ENCODE measurements at regions of chr2 and their contacts with region 1.

Region 1: GRCh38 chr2:9799665-9800632 is 43.3 kb upstream of the TAF1B start:
- DNase-seq: no peak
- H3K4me3 ChIP-seq: no peak overlapping the region
- CTCF ChIP-seq: peak; percentile 100

Region 2: DNA sequence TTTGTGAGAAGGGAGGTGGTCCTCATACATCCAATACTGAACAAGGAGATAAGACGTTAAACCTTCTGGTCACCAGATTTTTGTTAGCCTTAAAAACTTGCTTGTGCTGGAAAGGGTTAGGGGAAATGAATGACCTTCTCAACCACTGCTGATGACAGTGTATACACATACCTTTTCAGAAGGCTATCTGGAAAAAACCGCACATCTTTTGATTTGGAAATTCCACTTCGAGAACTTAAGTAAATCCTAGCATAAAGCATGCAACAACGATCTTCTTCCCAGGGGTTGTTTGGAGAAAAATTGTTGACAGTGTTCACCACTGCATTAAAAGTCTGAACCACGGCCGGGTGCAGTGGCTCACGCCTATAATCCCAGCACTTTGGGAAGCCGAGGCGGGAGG is 176.8 kb before region 1 on chr2:
- CTCF ChIA-PET with region 1: no interaction called
- POLR2A ChIA-PET with region 1: no interaction called
- DNase-seq: no peak
- H3K4me3 ChIP-seq: no peak overlapping the region
- CTCF ChIP-seq: no peak

Region 3: DNA sequence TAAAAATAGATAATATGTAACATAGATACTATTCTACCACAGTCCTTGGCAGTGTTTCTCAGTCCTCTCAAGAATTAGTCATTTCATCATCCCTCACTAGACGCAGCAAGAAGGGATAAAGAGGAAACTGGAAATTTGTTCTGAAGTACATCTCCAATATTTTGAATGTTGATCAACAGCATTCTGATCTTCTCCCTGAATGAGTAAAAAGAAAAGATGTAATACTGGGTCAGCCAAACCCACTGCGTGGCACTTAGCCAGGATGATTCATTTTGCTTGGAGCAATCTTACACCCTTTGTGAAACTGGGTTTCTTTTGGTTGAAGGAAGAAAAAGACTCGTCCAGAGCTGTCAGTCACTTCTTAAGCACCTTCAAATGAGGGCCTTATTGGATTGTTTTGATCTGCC is 97.4 kb after region 1 on chr2:
- CTCF ChIA-PET with region 1: no interaction called
- POLR2A ChIA-PET with region 1: no interaction called
- DNase-seq: peak; percentile 83
- H3K4me3 ChIP-seq: no peak overlapping the region
- CTCF ChIP-seq: no peak

Region 4: GRCh38 chr2:9975805-9976447 is 176.0 kb after region 1 on chr2:
- CTCF ChIA-PET with region 1: interaction called, 11 read pairs
- POLR2A ChIA-PET with region 1: no interaction called
- DNase-seq: peak; percentile 78
- H3K4me3 ChIP-seq: no peak overlapping the region
- CTCF ChIP-seq: no peak

Region 5: DNA sequence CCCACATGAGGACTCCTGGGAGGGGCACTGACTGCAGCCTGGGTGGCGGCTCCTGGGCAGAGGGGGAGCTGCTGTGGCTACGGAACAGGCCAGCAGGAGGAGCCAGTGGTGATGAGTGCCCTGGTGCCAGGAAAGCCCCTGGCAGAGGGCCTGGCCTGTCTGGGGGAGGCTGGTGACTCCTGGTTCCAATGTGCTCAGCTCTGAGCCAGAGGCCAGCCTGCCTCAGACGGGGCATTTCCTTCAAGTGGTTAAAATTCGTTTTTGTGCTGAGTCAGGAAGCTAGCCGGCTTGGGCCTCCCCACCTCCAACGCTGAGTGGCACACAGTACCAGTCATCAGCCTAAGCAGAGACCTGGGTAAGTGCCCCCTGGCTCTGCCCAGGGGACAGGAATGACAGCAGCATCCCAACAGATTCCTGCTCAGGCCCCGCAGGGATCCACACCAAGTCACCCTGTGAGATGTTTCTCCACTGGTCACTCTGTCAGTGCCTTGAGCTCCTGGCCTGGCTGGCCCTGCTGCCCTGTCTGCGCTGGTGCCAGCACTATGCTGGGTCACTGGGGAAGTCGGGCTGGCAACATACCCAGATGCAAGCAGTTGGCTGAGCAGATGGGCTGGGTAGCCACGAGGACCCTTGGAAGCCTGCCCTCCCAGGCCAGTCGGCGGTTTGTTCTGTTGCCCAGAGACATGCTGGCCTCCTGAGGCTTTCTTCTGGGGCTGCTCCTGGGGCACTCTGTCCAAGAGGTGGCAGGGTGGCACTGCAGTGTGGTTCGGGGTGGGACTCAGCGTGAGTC is 236.3 kb after region 1 on chr2:
- CTCF ChIA-PET with region 1: interaction called, 14 read pairs
- POLR2A ChIA-PET with region 1: no interaction called
- DNase-seq: peak; percentile 31
- H3K4me3 ChIP-seq: no peak overlapping the region
- CTCF ChIP-seq: peak; percentile 61

Region 6: GRCh38 chr2:10057231-10058107 is 257.5 kb after region 1 on chr2:
- CTCF ChIA-PET with region 1: interaction called, 260 read pairs
- POLR2A ChIA-PET with region 1: no interaction called
- DNase-seq: no peak
- H3K4me3 ChIP-seq: peak overlapping the region; percentile 34
- CTCF ChIP-seq: no peak